GM13977 (cell line): ENCODE measurements at regions of chr6 and their contacts with region 1.

Region 1: DNA sequence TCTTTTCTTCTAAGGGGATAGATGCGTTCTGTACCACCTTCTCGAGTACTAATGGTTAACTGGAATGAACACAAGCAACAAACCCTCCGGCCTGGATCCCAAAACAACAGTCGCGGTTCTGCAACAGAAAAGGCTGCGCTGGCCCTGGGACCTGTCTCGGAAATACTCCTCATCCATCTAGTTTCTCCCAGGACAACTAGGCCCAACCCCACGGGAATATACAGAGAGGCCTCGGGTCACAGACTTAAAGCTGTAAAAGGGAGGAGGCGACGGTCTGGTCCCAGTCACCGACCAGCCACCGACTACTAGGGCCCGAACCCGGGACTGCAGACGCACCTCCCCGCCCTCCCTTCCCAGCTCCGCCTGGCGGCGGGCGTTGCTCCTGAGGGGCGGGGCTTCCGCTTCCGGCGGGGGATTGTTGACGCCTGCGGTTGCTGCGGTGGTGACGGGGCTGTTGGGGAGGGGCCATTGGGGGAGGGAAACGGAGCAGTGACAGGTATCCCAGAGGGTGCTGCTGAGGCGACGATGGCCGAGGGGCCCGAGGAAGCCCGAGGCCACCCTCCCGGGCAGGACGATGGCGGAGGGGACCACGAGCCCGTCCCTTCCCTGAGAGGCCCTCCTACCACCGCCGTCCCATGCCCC is at the start of gene FAM8A1:
- DNase-seq: peak; percentile 93
- CTCF ChIP-seq: no peak

Region 2: DNA sequence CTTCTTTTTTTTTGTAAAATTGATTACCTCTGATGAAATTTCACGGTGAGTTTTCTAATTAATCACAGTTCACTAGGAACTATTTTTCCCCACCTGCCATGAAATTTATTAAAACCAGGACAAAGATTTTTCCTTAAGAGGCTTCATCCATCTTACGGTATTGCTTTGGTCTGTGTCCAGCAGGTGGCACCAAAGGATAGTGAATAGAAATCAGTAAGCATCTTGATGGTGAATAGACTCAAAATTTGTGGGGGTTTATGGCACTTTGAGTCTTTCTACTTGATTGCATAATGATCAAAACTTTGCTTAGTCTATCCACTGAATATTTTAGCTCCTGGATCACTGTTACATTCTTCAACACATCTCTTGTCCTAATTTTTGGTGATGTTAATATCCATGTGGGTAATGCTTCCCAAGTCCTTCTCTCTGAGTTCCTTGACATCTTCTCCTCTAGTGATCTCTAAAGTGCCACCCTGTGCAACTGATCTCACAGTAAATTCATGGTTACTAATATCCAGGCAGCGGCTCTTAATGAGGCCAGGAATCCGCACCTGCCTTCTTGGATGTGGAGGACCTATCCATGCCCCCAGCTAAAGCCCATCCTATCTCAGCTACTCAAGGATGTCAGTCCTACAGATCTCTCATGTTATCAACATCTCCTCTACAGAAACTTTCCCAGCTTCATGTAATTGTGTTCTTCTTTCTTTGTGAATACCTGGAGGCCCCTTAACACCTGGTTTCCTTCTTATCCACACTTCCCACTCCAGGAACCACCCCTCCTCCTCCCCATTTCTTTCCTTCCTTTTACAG is 443.7 kb before region 1 on chr6:
- in situ Hi-C with region 1: loop called (anchors 25 kb)
- DNase-seq: peak; percentile 56
- CTCF ChIP-seq: peak; percentile 74

Region 3: DNA sequence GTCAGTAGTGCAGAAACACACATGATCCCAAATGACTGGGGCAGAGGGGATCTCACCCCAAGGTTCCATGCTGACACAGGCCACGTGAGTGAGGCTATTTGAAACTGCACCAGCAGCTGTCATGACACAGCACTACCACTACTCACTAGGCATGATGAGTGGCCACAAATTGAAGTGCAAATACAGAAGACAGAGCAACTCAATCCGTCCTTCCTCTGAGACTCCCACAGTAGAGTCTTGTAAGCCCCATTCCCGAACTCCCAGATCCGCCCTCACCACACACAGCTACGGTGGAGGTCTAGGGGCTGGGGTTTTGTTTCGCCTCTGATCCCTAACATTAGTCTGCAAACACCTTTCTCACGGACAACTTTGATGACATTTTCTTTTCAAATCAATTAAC is 220.0 kb after region 1 on chr6:
- in situ Hi-C with region 1: loop called (anchors 25 kb)
- DNase-seq: no peak
- CTCF ChIP-seq: no peak